AG04450 (cell line): ENCODE measurements at regions of chr2 and their contacts with region 1.

Region 1: DNA sequence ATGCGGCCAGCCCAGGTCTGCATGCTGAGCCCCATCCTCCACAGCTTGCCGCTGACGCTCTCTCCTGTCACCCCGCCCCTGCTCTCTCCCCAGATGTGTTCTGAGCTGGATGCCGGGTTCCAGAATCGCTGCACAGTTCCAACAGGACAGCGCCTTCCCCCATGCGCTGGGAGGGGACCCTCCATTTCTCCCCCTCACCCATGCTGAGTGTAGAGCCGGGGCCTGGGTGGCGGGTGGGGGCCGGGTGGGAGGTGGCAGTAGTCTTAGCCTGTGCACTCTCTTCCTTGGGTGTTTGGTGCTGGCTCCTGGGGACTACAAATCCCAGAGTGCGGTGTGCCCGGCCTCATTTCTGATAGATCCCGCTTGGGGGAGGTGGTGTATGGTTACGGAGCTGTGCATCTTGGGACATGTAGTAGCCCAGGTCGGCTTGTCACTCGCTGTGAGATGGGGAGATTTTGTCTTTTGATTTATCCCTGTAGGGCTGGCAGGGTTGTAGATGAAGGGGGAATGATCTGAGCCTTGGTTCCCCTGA is 6.8 kb downstream of the DNAJB2 start:
- DNase-seq: peak; percentile 29
- H3K4me3 ChIP-seq: no peak overlapping the region
- H3K27ac ChIP-seq: peak overlapping the region; percentile 31
- H3K27me3 ChIP-seq: no peaks in the 10 kb centered on the region
- CTCF ChIP-seq: no peak

Region 2: GRCh38 chr2:219206442-219207253 is 79.3 kb before region 1 on chr2 and contains the start of gene ZFAND2B:
- CTCF ChIA-PET with region 1: interaction called, 10 read pairs
- POLR2A ChIA-PET with region 1: interaction called, 3 read pairs
- DNase-seq: peak; percentile 69
- H3K4me3 ChIP-seq: peak within 1 kb of the TSS; percentile 83
- H3K27ac ChIP-seq: peak within 1 kb of the TSS; percentile 78
- H3K27me3 ChIP-seq: no peaks in the 10 kb centered on the region
- CTCF ChIP-seq: no peak; the same call in 1 of the 2 replicates
- polyA plus RNA-seq, gene ZFAND2B: 24.5 and 29.6 TPM in 2 replicates